ENCODE measurements at regions of chr6 and their contacts with region 1.

Region 1: GRCh38 chr6:83153883-83154521 is 39.1 kb downstream of the PGM3 start:
- DNase-seq: no peak
- H3K4me3 ChIP-seq: no peak overlapping the region
- H3K27ac ChIP-seq: no peak overlapping the region
- H3K4me1 ChIP-seq: peaks cover 0 to 4% (median 0%) of the 10 kb centered on the region in 4 donors
- H3K27me3 ChIP-seq: no peaks in the 10 kb centered on the region
- CTCF ChIP-seq: no peak
- EP300 ChIP-seq: no peak
- POLR2A ChIP-seq: no peak

Region 2: GRCh38 chr6:82217018-82217586 is 936.9 kb before region 1 on chr6:
- intact Hi-C with region 1: loop called (anchors 10 kb)
- DNase-seq: no peak
- H3K4me3 ChIP-seq: no peak overlapping the region
- H3K27ac ChIP-seq: no peak overlapping the region
- H3K4me1 ChIP-seq: no peaks in the 10 kb centered on the region
- H3K27me3 ChIP-seq: no peaks in the 10 kb centered on the region
- CTCF ChIP-seq: no peak
- EP300 ChIP-seq: no peak
- POLR2A ChIP-seq: no peak

Measured in esophagus muscularis mucosa (tissue), 4 donors.